K562 (cell line): ENCODE measurements at regions of chr22 and their contacts with region 1.

Region 1: DNA sequence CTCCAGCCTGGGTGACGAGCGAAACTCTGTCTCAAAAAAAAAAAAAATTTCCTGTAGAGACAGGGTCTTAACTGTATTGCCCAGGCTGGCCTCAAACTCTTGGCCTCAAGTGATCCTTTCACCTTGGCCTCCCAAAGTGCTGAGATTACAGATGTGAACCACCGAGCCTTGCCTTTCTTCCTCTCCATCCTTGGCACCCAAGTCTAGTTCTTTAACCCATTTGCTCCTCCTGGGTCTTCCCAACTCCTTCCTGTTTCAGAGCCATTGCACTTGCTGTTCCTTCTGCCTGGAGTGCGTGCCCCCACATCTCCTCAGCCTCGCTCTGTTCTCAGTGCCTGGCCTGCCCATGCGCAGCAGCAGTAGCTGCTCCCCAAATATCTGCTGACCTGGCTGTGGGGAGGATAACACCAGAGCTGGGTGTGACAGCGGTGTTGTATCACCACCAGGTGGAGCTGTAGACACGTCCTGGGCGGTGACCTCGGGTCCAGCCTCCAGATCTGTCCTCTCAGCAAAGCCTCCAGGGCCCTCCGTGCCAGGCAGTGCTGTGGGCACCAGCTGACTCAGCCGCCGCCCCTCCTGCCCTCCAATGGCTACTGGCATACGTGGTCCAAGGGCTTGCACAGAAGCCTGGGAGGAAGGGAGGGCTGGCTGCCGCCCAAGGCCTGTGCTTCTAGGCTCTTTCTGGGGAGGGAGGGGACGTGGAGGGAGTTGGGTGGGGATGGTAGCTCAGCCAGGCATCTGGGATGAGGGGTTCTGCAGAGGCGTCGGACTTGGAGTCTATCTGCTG is 22.0 kb downstream of the TEF start:
- DNase-seq: peak; percentile 86 to 89 (median 86)
- ATAC-seq: peak; percentile 100
- H3K4me3 ChIP-seq: no peak overlapping the region
- H3K27ac ChIP-seq: no peak overlapping the region
- H3K4me1 ChIP-seq: peaks cover 0 to 7% of the 10 kb centered on the region in 2 experiments; a peak in 3 of 5 replicates
- H3K27me3 ChIP-seq: no peaks in the 10 kb centered on the region
- CTCF ChIP-seq: peak; percentile 87 to 90 (median 89)
- EP300 ChIP-seq: no peak
- POLR2A ChIP-seq: no peak
- RAD21 ChIP-seq: peak; percentile 84 to 94

Region 2: DNA sequence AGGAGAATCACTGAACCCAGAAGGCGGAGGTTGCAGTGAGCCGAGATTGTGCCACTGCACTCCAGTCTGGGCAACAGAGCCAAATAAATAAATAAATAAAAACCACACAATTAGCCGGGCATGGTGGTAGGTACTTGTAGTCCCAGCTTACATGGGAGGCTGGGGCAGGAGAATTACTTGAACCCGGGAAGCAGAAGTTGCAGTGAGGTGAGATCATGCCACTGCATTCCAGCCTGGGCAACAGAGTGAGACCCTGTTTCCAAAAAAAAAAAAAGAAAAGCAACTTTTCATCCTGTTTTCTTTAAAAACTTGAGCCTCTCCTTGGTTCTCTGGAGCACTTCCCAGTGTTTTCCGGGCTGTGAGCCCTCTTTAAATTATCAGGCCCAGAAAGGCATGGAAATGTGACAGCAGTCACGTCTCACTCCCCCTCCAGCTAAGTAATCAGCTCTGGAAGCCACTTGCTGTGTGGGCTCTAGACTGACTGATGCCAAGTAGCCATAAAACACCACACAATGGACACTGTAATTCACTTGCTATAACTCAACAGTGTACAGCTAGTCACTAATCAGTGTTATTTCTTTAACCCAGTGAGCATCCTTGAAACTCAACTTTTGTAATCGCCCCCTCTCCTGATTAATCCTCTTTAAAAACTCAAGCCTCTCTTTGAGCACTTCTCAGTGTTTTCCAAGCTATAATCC is 737.4 kb before region 1 on chr22:
- CTCF ChIA-PET with region 1: no interaction called
- POLR2A ChIA-PET with region 1: no interaction called
- in situ Hi-C with region 1: no loop called
- intact Hi-C with region 1: no loop called
- DNase-seq: peak in 1 of 4 experiments; percentile 2
- ATAC-seq: no peak
- H3K4me3 ChIP-seq: no peak overlapping the region
- H3K27ac ChIP-seq: no peak overlapping the region
- H3K4me1 ChIP-seq: peaks cover 0 to 18% of the 10 kb centered on the region in 2 experiments; a peak in 3 of 5 replicates
- H3K27me3 ChIP-seq: no peaks in the 10 kb centered on the region
- CTCF ChIP-seq: no peak
- EP300 ChIP-seq: no peak
- POLR2A ChIP-seq: no peak
- RAD21 ChIP-seq: no peak

Region 3: DNA sequence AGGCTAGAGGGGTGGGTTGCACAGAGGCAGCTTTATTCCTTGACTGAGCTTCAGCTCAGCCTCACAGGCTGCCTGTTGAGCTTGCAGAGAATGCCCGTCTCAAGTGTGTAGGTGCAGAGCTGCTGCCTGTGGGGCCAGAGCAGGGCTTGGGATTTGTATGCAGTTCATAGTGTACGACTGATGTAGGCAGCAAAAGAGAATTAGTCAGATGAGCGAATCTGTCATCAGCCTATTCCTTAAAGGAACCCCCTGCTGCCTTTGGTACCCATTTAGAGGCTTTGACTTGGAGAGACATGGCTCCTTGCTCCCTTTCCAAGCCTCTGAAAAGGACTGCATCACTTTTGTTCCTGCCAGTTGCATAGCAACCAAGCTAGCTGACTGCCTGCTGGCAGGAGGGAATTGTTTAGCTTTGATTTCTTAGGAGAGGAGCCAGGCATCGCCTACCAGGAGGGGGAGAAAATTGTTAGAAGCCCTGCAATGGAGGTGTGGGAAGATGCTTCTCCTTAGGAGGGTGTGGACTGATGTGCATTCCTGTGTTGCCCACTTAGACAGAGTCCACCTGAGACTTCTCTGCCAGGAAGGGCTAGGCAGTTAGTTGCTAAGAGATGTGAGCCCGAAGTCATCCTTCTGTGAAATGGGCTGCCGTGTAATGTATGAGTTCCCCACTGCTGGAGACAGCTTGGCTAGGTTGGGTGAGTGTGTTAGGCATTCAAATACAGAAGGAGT is 76.1 kb after region 1 on chr22:
- CTCF ChIA-PET with region 1: no interaction called
- POLR2A ChIA-PET with region 1: no interaction called
- in situ Hi-C with region 1: no loop called
- intact Hi-C with region 1: no loop called
- DNase-seq: no peak
- ATAC-seq: no peak
- H3K4me3 ChIP-seq: no peak overlapping the region
- H3K27ac ChIP-seq: no peak overlapping the region
- H3K4me1 ChIP-seq: peaks cover 6% of the 10 kb centered on the region in 2 experiments; a peak in 3 of 5 replicates
- H3K27me3 ChIP-seq: no peaks in the 10 kb centered on the region
- CTCF ChIP-seq: no peak
- EP300 ChIP-seq: no peak
- POLR2A ChIP-seq: no peak
- RAD21 ChIP-seq: no peak

Region 4: GRCh38 chr22:41517172-41518047 is 113.7 kb after region 1 on chr22:
- CTCF ChIA-PET with region 1: interaction called, 10 read pairs
- POLR2A ChIA-PET with region 1: interaction called, 3 read pairs
- in situ Hi-C with region 1: no loop called
- intact Hi-C with region 1: no loop called
- DNase-seq: peak in 3 of 4 experiments; percentile 43 to 46 (median 43)
- ATAC-seq: no peak
- H3K4me3 ChIP-seq: no peak overlapping the region
- H3K27ac ChIP-seq: no peak overlapping the region
- H3K4me1 ChIP-seq: peaks cover 12 to 19% of the 10 kb centered on the region in 2 experiments
- H3K27me3 ChIP-seq: no peaks in the 10 kb centered on the region
- CTCF ChIP-seq: peak; percentile 72 to 80 (median 74)
- EP300 ChIP-seq: no peak
- POLR2A ChIP-seq: no peak; the same call in 1 of the 2 replicates
- RAD21 ChIP-seq: peak; percentile 45 to 68

Region 5: GRCh38 chr22:41526837-41527799 is 123.4 kb after region 1 on chr22:
- CTCF ChIA-PET with region 1: interaction called, 11 read pairs
- POLR2A ChIA-PET with region 1: interaction called, 7 read pairs
- in situ Hi-C with region 1: loop called (anchors 5 kb)
- intact Hi-C with region 1: loop called (anchors 2 kb)
- DNase-seq: peak; percentile 61 to 76 (median 72)
- ATAC-seq: peak; percentile 69
- H3K4me3 ChIP-seq: no peak overlapping the region
- H3K27ac ChIP-seq: 0 out of 3 replicates have a peak overlapping the region, but pooled peaks have one; percentile 39
- H3K4me1 ChIP-seq: peaks cover 24 to 68% of the 10 kb centered on the region in 2 experiments
- H3K27me3 ChIP-seq: no peaks in the 10 kb centered on the region
- CTCF ChIP-seq: peak; percentile 81 to 92 (median 85)
- EP300 ChIP-seq: no peak
- POLR2A ChIP-seq: peak; percentile 53; the same call in 1 of the 2 replicates
- RAD21 ChIP-seq: peak; percentile 61 to 70